ENCODE measurements at regions of chr3 and their contacts with region 1.

Region 1: DNA sequence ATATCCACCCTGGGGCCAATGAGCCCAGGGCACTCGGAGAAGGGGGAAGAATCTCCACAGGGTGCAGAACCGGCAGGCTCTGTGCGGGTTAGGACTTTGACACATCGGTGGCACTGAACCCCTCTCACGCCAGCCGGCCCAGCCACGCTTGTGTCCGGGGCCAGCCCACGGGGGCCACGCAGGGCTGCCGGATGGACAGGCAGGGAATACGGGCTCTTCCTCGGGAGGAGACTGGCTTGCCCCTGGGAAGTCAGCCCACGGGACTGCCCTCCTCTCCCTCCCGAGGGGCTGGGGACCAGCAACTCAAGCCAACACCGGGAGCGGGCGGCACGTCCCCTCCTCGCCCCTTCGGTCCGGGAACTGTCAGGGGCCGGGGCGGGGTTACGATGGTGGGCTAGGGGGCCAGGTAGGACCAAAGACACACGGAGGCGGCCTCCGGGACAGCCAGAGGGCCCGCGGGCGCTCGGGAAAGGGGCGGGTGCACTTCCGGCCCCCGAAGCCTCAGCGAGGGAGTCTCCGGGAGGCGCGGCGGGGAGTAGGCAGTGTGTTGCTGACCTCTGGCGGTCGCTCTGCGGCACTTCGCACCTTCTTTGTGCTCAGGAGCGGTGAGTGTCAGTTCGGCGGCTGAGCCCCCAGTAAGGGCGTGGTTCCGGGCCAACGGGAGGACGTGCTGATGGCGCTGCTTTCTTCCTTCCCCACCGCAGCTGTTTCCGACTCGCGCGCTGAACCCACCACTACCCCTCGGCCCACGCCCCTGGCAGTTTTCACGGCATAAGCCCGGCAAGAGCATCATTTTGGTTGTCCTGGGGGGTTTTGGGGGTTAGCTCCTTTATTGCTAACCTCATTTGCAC is 5.1 kb upstream of the CYP8B1 start:
- DNase-seq: peak; percentile 95
- ATAC-seq: peak; percentile 99
- H3K4me3 Mint-ChIP-seq: peak overlapping the region; percentile 78
- H3K27ac Mint-ChIP-seq: peak overlapping the region; percentile 92
- H3K4me1 Mint-ChIP-seq: peaks cover 6% of the 10 kb centered on the region
- H3K27me3 Mint-ChIP-seq: peaks cover 20% of the 10 kb centered on the region

Region 2: DNA sequence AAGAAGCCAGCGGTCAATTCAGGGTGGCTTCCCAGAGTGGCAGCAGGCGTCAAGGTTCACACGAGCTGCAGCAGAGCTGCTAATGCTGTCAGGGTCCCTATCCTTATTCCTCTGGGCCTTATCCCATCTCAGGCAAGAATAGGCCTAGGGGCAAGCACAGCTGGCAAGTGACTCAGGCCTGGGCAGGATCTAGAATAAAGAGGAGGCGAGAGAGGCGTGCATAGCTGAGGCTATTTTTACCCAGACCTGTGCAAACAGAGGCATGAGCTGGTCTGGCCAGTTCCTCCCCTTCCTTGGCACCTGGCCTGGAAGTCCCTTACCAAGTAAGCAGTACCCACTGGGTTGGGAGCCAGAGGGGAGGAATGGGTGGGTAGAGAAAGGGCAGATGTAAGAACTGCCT is 390.6 kb before region 1 on chr3:
- CTCF ChIA-PET with region 1: no interaction called
- DNase-seq: no peak
- ATAC-seq: no peak
- H3K4me3 Mint-ChIP-seq: no peak overlapping the region
- H3K27ac Mint-ChIP-seq: no peak overlapping the region
- H3K4me1 Mint-ChIP-seq: no peaks in the 10 kb centered on the region
- H3K27me3 Mint-ChIP-seq: peaks cover 5% of the 10 kb centered on the region

Region 3: DNA sequence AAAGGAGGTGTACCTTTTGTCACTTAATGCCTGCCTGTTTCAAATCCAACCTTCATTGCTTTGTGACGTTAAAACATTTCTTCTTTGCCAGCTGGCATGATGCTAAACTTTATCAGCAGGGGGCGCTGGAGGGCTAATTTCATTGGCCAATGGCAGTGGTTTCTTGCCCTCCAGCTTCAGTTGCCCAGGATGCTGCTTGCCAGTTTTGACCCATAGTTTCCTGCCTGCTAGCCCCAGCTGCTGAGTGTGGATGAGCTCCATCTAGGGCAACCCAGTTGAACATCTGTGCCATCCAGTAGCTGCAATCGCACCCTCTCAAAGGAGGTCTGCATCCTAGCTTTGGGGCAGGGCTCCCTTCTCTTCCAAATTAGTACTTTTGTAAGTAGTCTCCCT is 49.5 kb before region 1 on chr3:
- CTCF ChIA-PET with region 1: interaction called, 27 read pairs
- DNase-seq: peak; percentile 89
- ATAC-seq: peak; percentile 87
- H3K4me3 Mint-ChIP-seq: no peak overlapping the region
- H3K27ac Mint-ChIP-seq: no peak overlapping the region
- H3K4me1 Mint-ChIP-seq: peaks cover 9% of the 10 kb centered on the region
- H3K27me3 Mint-ChIP-seq: peaks cover 26% of the 10 kb centered on the region

Region 4: DNA sequence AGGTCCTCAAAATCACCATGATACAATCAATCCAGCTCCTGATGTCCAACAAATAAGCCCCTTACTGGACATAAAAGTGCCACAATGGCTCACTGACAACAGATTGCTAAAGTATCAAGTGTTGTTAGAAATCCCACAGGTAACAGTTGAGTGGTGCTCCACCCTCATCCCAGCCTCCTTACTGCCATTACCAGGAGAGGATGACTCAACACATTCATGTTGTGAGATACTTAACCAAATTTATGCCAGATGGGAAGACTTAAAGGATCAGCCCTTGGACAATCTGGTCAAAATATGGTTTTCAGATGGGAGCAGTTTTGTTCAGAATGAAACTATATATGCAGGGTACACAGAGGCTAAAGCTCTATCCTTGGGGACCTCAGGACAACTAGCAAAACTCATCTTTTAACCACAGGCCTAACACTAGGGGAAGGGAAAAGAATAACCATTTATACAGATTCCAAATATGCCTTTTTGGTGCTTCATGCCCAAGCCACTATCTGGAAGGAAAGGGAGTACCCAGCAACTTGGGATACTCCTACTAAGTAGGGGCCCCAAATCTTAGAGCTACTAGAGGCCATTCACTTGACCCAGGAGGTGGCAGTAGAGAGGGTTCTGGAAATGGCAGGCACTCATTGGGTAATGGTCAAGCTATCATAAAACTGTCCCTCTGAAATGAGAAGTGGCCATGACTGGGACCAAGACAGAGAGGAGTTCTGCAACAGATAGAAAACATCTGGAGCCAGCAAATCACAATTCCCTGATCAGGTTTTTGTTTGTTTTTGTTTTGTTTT is 18.3 kb after region 1 on chr3:
- CTCF ChIA-PET with region 1: no interaction called
- DNase-seq: no peak
- ATAC-seq: no peak
- H3K4me3 Mint-ChIP-seq: no peak overlapping the region
- H3K27ac Mint-ChIP-seq: no peak overlapping the region
- H3K4me1 Mint-ChIP-seq: peaks cover 29% of the 10 kb centered on the region
- H3K27me3 Mint-ChIP-seq: peaks cover 7% of the 10 kb centered on the region

Measured in activated CD8-positive, alpha-beta memory T cell treated with anti-CD3 and anti-CD28 coated beads, Interleukin-2, amount 10 ng/mL, durations not matched to agents 7 days and 5 days (primary cell).